Left cardiac atrium (tissue), 4 donors: ENCODE measurements at regions of chr4 and their contacts with region 1.

Region 1: DNA sequence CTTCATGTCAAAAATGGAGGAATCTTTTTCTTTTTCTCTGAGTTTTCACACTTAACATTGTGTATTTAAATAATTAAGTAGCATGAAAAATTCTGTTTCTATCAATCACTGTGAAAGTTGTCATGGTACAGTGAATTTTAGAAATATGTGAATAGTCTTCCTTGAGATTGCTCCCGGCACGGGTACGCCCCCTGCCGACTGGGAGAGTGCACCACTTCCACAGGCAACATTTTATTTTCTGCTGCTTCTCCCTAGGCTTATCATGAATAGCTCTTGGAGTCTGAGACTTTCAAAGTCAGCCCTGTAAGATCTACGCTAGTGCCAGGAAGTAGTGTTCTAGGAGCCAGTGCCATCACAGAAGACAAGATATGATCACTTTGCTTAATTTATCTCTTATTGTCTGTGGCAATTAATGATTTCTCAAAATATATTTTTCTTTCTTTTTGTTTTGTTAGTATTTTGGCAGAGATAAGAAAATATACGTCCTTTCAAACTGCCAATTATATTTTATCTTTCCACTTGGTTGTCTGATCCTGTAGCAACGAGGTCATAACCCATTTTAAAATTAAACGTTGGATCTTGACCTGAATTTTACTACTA is 763.8 kb upstream of the AADAT start:
- DNase-seq: peak; percentile 20
- ATAC-seq: peak in 1 of 2 donors; percentile 24

Region 2: DNA sequence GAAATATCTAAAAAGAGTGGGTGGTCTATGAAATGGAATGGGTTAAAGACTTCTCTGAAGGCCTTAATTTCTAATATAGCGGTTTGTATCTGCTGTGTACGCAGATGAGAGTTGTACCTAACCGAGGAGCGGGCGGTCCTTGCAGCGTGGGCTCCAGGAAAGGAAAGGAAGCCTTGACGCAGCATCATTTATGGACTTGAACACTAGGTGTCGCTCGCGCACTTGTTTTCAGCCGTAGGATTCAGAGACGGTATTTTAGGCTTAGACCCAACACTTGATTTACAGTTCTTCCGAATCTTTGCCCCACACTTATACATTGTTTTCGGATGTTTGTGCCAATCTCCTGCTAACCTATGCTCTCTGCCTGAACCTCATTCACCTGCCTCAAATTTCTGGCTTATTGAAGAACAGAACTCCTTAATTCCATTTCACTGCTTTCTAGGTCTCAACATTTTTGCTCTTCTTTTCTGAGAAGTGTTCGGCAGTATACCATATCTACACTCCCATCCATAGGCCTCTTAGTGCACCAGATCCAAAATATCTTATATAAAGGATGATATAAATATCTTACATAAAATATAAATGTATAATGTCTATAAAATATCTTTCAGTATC is 714.8 kb before region 1 on chr4:
- intact Hi-C with region 1: loop called in 1 of 2 experiments (anchors 5 kb)
- DNase-seq: peak; percentile 73
- ATAC-seq: peak; percentile 44 to 70

Region 3: GRCh38 chr4:170259631-170260153 is 593.8 kb before region 1 on chr4:
- intact Hi-C with region 1: loop called in 1 of 2 experiments (anchors 10 kb)
- DNase-seq: peak; percentile 39
- ATAC-seq: peak; percentile 51 to 61

Region 4: DNA sequence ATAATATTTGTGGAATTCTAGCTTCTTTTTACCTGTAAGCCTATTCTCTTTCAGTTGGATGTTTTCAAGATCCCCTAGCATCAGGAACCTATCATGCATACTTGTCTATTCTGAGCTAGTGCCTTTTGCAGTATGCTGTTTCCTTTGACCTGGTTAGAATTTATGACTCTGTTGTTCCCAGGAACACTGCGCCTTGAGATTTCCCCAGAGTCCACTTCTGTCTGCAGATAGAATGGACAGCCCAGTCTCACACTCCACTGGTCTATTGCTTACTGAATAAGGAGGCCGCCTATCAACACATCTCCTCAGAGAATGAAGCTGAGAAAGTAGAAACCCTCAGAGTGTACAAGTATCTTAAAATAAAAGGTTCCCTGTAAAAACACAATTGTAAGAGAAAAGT is 494.6 kb after region 1 on chr4:
- intact Hi-C with region 1: no loop called
- DNase-seq: no peak
- ATAC-seq: no peak